ENCODE measurements at regions of chr11 and their contacts with region 1.

Region 1: DNA sequence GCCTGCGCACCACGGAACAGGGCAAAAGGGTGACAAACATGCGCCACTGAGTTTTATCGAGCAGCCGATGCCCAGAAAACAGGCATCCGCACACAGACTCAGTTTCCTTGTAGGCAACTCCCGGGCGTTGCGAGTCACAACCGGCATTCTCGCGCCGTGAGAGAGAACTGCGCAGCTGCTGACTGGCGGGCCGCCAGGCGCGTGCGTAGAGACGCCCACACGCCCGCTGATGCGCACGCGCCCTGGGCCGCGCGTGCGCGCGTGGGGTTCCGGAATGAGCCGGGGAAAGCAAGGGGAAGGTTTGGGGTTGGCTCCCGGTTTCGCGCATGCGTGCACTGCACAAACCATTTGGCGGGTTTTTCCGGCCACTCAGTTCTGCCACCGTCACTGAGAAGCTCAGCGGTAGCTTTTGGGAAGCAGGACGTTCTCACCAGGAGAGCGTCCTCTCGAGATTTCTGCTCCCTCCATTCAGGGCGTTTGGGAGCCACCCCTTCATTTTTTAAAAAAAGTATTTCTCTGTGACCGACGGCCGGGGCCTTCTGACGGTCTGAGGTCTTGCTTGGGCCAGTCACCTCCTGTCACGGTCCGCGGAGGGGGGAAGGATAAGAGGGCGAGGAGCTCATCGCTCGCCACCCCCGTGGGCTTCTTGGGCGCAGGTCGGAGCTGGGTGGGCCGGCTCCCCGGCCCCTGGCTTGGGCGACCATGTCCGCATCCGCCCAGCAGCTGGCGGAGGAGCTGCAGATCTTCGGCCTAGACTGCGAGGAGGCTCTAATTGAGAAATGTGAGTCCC is at the start of gene POLA2:
- DNase-seq: peak; percentile 98
- ATAC-seq: peak; percentile 93
- H3K4me3 Mint-ChIP-seq: peak within 1 kb of the TSS; percentile 98
- H3K27ac Mint-ChIP-seq: peak within 1 kb of the TSS; percentile 96
- H3K4me1 Mint-ChIP-seq: peaks cover 50% of the 10 kb centered on the region
- H3K27me3 Mint-ChIP-seq: no peaks in the 10 kb centered on the region
- total RNA-seq, gene POLA2: 63.1 to 83.3 TPM

Region 2: GRCh38 chr11:65027213-65028067 is 234.3 kb before region 1 on chr11 and contains the start of gene SNX15:
- CTCF ChIA-PET with region 1: no interaction called
- POLR2A ChIA-PET with region 1: no interaction called
- intact Hi-C with region 1: loop called in 1 of 2 experiments (anchors 1 kb)
- DNase-seq: peak; percentile 94
- ATAC-seq: peak; percentile 91
- H3K4me3 Mint-ChIP-seq: peak within 1 kb of the TSS; percentile 73
- H3K27ac Mint-ChIP-seq: peak within 1 kb of the TSS; percentile 86
- H3K4me1 Mint-ChIP-seq: peaks cover 21% of the 10 kb centered on the region
- H3K27me3 Mint-ChIP-seq: no peaks in the 10 kb centered on the region
- total RNA-seq, gene SNX15: 12.1 to 14.2 TPM

Region 3: DNA sequence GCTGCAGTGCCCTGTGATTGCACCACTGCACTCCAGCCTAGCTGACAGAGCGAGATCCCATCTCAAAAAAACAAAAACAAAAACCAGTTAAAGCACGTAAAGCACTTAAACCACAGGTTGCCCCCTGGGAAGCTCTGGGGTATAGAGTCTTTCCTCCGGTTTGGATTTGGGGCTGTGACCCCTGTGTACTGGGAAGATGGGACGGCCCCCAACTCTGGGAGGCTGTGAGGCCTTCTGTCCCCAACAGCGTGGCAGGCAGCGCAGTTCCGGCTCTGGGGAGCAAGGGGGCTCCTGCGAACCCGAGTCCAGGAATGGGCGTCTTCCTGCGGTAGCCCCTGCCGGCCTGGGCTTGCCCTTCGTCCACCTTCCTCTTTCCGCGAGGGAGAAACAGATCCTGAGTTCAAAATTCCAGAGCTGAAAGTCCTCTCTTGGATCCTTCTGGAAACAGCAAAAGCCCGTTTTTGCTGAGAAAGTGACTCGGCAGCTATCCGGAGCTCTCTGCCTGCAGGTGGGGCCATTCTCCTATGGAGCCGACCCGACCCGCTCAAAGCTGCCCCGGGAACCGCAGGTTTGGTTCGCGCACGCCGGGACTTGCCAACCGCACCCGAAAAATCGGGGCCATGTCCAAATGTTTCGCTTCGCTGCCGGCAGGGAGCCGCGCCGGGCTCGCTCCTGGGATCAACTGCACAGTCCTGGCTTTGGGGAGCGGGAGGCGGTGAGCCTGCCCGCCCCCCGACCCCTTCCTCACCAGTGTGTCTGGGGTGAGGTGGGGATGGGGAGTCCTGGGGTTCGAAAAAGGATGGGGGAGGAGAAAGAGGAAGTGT is 36.3 kb before region 1 on chr11:
- CTCF ChIA-PET with region 1: interaction called, 10 read pairs
- POLR2A ChIA-PET with region 1: interaction called, 3 read pairs
- intact Hi-C with region 1: no loop called
- DNase-seq: peak; percentile 81
- ATAC-seq: peak; percentile 88
- H3K4me3 Mint-ChIP-seq: peak overlapping the region; percentile 71
- H3K27ac Mint-ChIP-seq: no peak overlapping the region
- H3K4me1 Mint-ChIP-seq: peaks cover 15% of the 10 kb centered on the region
- H3K27me3 Mint-ChIP-seq: peaks cover 21% of the 10 kb centered on the region

Region 4: GRCh38 chr11:65314501-65315203 is 52.9 kb after region 1 on chr11 and contains the start of gene CDC42EP2:
- CTCF ChIA-PET with region 1: interaction called, 28 read pairs
- POLR2A ChIA-PET with region 1: interaction called, 6 read pairs
- intact Hi-C with region 1: loop called in 1 of 2 experiments (anchors 1 kb)
- DNase-seq: peak; percentile 87
- ATAC-seq: peak; percentile 90
- H3K4me3 Mint-ChIP-seq: peak within 1 kb of the TSS; percentile 73
- H3K27ac Mint-ChIP-seq: no peak within 1 kb of the TSS
- H3K4me1 Mint-ChIP-seq: peaks cover 11% of the 10 kb centered on the region
- H3K27me3 Mint-ChIP-seq: peaks cover 5% of the 10 kb centered on the region
- total RNA-seq, gene CDC42EP2: 0.91 to 0.93 TPM

Region 5: DNA sequence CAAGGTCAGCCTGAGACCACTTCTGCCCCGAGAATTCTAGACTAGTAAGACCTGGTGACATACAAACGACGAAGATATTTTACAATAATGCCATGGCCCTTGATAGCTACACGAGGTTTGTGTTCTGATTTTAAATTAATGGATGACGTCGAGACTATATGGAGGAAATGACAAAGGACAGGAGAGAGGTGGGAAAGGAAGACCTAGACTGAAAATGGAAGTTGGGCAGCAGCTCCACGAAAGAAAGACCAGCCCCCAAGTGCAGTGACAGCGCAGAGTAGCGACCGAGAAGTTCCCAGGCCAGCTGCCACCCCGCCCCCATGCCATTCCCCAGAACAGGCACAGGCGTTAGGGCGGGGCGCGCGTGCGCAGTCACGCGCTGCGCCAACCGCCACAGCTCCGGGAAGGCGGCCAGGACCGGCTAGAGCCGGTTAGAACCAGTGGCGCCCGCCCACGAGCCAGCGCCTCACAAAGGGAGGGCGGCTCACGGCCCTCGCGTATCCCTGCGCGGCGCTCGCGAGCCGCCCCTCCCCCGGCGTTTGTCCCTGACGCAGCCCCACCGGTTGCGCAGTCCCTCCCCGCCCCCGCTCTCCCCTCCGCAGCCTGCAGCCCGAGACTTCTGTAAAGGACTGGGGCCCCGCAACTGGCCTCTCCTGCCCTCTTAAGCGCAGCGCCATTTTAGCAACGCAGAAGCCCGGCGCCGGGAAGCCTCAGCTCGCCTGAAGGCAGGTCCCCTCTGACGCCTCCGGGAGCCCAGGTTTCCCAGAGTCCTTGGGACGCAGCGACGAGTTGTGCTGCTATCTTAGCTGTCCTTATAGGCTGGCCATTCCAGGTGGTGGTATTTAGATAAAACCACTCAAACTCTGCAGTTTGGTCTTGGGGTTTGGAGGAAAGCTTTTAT is 235.6 kb after region 1 on chr11:
- CTCF ChIA-PET with region 1: interaction called, 3 read pairs
- POLR2A ChIA-PET with region 1: interaction called, 15 read pairs
- intact Hi-C with region 1: no loop called
- DNase-seq: peak; percentile 100
- ATAC-seq: peak; percentile 70
- H3K4me3 Mint-ChIP-seq: no peak overlapping the region
- H3K27ac Mint-ChIP-seq: peak overlapping the region; percentile 96
- H3K4me1 Mint-ChIP-seq: peaks cover 41% of the 10 kb centered on the region
- H3K27me3 Mint-ChIP-seq: no peaks in the 10 kb centered on the region

Region 6: DNA sequence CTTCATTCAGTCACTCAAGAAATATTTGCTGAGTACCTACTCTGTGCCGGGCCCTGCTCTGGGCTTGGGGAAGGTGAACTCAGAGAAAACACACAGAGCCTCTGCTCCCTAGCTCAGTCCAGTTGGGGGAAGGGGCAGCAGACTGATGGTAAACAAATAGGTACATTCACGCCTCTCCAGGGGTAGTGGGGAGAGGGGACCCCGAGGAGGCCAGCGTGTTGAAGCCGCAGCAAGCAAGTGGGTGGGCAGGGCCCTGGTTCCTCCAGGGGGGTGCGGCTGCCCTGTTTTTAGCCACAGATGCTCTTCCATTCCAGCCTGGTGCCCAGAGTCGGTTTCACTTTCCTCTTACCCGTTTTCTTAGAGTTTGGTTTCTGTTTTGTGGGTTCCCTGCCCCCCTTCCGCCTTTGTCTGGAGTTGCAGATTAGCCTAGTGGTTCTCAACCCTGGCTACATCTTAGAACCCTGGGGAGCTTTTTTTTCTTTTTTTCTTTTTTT is 666.2 kb after region 1 on chr11:
- CTCF ChIA-PET with region 1: no interaction called
- POLR2A ChIA-PET with region 1: no interaction called
- intact Hi-C with region 1: no loop called
- DNase-seq: peak; percentile 88
- ATAC-seq: peak; percentile 94
- H3K4me3 Mint-ChIP-seq: peak overlapping the region; percentile 65
- H3K27ac Mint-ChIP-seq: peak overlapping the region; percentile 96
- H3K4me1 Mint-ChIP-seq: peaks cover 26% of the 10 kb centered on the region
- H3K27me3 Mint-ChIP-seq: no peaks in the 10 kb centered on the region